ENCODE measurements at regions of chr6 and their contacts with region 1.

Region 1: DNA sequence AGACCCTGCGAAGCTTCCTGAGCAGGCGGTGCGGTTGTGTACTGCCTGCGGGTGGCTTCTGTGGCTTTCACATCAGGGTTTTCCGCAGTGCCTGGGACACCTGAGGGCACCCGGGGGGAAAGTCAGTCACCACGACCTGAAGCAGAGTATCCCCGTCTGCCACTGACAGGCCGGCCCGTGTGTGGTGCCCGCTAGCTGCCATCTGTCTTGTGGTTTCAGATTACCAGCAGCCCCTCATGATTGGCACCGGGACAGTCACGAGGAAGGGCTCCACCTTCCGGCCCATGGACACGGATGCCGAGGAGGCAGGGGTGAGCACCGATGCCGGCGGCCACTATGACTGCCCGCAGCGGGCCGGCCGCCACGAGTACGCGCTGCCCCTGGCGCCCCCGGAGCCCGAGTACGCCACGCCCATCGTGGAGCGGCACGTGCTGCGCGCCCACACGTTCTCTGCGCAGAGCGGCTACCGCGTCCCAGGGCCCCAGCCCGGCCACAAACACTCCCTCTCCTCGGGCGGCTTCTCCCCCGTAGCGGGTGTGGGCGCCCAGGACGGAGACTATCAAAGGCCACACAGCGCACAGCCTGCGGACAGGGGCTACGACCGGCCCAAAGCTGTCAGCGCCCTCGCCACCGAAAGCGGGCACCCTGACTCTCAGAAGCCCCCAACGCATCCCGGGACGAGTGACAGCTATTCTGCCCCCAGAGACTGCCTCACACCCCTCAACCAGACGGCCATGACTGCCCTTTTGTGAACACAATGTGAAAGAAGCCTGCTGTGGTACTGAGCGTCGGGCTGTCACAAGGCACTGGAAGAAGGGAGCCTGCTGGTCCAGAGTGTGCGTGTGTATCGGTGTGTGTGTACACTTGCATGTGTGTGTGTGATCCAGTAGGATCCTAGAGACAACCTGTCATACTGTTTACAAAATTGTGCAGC is 54.4 kb downstream of the GOPC start:
- DNase-seq: peak; percentile 77
- ATAC-seq: peak; percentile 90

Region 2: DNA sequence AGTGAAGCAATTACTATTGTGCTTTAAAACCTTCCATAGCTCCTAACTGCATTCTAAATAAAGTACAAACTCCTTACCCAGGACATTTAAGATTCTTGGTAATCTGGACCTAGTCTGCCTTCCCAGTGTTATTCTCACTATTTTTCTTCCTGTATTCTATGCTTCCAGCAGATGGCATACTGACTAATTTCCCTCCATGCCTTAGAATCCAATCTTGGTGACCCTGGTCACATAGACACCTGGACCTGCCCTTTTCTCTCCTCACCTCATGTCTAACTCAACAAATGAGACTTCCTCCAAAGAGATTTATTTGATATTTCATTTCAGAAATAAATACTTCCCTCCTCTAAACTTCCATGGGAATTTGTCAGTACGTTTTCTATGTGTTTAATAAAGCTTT is 148.0 kb before region 1 on chr6:
- intact Hi-C with region 1: no loop called
- DNase-seq: no peak
- ATAC-seq: no peak

Region 3: DNA sequence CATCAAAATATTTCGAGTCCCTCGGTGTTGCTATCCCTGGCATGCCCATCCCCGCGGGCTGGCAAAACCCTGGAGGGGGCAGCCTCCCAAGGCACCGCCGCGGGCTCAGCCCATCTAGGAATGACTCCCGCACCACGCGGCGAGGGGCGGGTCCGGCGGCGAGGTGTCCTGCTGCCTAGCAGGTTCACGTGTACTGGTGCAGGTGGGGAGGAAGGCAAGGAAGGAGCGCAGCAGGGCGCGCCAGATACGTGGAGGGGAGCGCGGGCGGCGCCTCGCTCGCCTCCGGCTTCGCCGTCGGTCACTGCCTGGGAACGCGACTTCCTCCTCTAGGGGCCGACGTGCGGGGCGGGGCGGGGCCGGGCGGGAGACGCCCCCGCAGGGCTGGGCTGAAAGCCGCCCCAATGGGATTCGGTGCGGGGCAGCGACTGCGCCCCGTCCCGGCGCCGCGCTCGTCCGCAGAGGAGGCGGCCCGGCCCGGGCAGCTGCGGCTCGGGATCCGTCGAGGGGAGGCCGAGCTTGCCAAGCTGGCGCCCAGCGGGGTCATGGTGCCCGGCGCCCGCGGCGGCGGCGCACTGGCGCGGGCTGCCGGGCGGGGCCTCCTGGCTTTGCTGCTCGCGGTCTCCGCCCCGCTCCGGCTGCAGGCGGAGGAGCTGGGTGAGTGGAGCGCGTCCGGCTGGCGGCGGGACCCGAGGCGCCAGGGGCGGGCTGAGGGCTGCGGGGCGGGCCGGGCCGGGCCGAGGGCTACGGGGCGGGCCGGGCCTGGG is 65.5 kb before region 1 on chr6 and contains the start of gene DCBLD1:
- intact Hi-C with region 1: loop called (anchors 5 kb)
- DNase-seq: peak; percentile 90
- ATAC-seq: peak; percentile 94
- total RNA-seq, gene DCBLD1: 6.1 TPM

Region 4: GRCh38 chr6:117733341-117733740 is 185.4 kb after region 1 on chr6:
- intact Hi-C with region 1: no loop called
- DNase-seq: no peak
- ATAC-seq: no peak